ENCODE measurements at regions of chr6 and their contacts with region 1.

Region 1: GRCh38 chr6:35342258-35343091 is at the start of gene PPARD:
- DNase-seq: peak; percentile 97 to 98
- ATAC-seq: peak; percentile 99
- total RNA-seq, gene PPARD: 36.0 to 68.0 TPM

Region 2: GRCh38 chr6:34867484-34867883 is 475.0 kb before region 1 on chr6:
- intact Hi-C with region 1: no loop called
- DNase-seq: no peak
- ATAC-seq: peak; percentile 47

Region 3: GRCh38 chr6:35213824-35214756 is 128.4 kb before region 1 on chr6 and contains the start of gene SCUBE3:
- intact Hi-C with region 1: no loop called
- DNase-seq: peak in 1 of 2 donors; percentile 24
- ATAC-seq: peak; percentile 59
- total RNA-seq, gene SCUBE3: 0.09 to 0.67 TPM

Region 4: GRCh38 chr6:35435074-35435837 is 92.8 kb after region 1 on chr6:
- intact Hi-C with region 1: loop called in 1 of 2 experiments (anchors 10 kb)
- DNase-seq: peak; percentile 87 to 93
- ATAC-seq: peak; percentile 89

Region 5: GRCh38 chr6:35449287-35449881 is 106.9 kb after region 1 on chr6:
- intact Hi-C with region 1: loop called in 1 of 2 experiments (anchors 1 kb)
- DNase-seq: peak in 1 of 2 donors; percentile 31
- ATAC-seq: peak; percentile 45

Measured in left colon (tissue), 2 donors.